Endothelial cell of umbilical vein (primary cell): ENCODE measurements at regions of chr5 and their contacts with region 1.

Region 1: GRCh38 chr5:17189381-17190036 is 27.9 kb upstream of the BASP1 start:
- DNase-seq: peak; percentile 91
- H3K4me3 ChIP-seq: no peak overlapping the region
- H3K27ac ChIP-seq: no peak overlapping the region
- H3K4me1 ChIP-seq: peaks cover 23% of the 10 kb centered on the region
- H3K27me3 ChIP-seq: no peaks in the 10 kb centered on the region
- CTCF ChIP-seq: peak; percentile 65 to 90
- POLR2A ChIP-seq: no peak

Region 2: GRCh38 chr5:16364910-16365309 is 824.6 kb before region 1 on chr5:
- CTCF ChIA-PET with region 1: no interaction called
- POLR2A ChIA-PET with region 1: no interaction called
- dilution Hi-C with region 1: no loop called
- intact Hi-C with region 1: no loop called
- DNase-seq: no peak
- H3K4me3 ChIP-seq: no peak overlapping the region
- H3K27ac ChIP-seq: no peak overlapping the region
- H3K4me1 ChIP-seq: no peaks in the 10 kb centered on the region
- H3K27me3 ChIP-seq: no peaks in the 10 kb centered on the region
- CTCF ChIP-seq: no peak
- POLR2A ChIP-seq: no peak

Region 3: DNA sequence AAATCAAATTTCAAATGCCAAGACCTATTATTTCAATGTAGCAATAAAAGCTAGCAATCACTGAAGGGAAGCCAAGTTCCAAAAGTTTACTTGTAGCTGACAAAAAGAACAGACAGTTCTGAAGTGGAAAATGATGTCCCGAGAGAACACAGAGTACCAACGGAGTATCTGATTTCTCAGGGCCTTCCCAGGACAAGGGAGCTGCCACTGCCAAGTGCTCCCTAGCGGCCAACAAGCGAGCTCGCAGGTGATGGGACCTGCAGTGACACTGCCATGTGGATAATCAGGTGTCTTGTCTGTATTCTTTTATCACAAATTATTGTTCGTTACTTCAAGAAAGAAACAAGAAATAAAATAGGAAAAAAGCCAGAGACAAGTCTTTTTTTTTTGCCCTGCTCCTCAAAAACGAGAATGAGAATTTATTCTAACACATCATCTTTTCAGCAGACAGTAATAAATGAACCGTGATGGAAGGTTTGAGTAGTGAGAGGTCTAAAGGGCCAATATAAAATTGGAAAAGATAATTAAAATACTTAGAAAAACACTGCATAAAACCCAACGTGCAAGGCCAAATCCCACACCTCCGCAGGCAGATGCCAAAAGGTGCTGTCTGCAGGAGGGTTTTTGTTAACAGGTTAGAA is 412.8 kb before region 1 on chr5:
- CTCF ChIA-PET with region 1: interaction called, 10 read pairs
- POLR2A ChIA-PET with region 1: no interaction called
- dilution Hi-C with region 1: loop called (anchors 25 kb)
- intact Hi-C with region 1: no loop called
- DNase-seq: no peak
- H3K4me3 ChIP-seq: no peak overlapping the region
- H3K27ac ChIP-seq: no peak overlapping the region
- H3K4me1 ChIP-seq: peaks cover 7% of the 10 kb centered on the region
- H3K27me3 ChIP-seq: no peaks in the 10 kb centered on the region
- CTCF ChIP-seq: peak in 1 of 2 donors; percentile 14
- POLR2A ChIP-seq: no peak

Region 4: GRCh38 chr5:16812911-16813310 is 376.6 kb before region 1 on chr5:
- CTCF ChIA-PET with region 1: interaction called, 14 read pairs
- POLR2A ChIA-PET with region 1: no interaction called
- dilution Hi-C with region 1: no loop called
- intact Hi-C with region 1: no loop called
- DNase-seq: no peak
- H3K4me3 ChIP-seq: no peak overlapping the region
- H3K27ac ChIP-seq: no peak overlapping the region
- H3K4me1 ChIP-seq: peaks cover 10% of the 10 kb centered on the region
- H3K27me3 ChIP-seq: no peaks in the 10 kb centered on the region
- CTCF ChIP-seq: no peak
- POLR2A ChIP-seq: no peak

Region 5: GRCh38 chr5:16934123-16934522 is 255.4 kb before region 1 on chr5:
- CTCF ChIA-PET with region 1: interaction called, 174 read pairs
- POLR2A ChIA-PET with region 1: interaction called, 3 read pairs
- dilution Hi-C with region 1: no loop called
- intact Hi-C with region 1: loop called (anchors 1 kb)
- DNase-seq: peak; percentile 86
- H3K4me3 ChIP-seq: peak overlapping the region; percentile 83 to 99 (median 97)
- H3K27ac ChIP-seq: peak overlapping the region; percentile 81
- H3K4me1 ChIP-seq: peaks cover 48% of the 10 kb centered on the region
- H3K27me3 ChIP-seq: no peaks in the 10 kb centered on the region
- CTCF ChIP-seq: peak; percentile 90 to 99
- POLR2A ChIP-seq: no peak

Region 6: GRCh38 chr5:17081142-17081541 is 108.4 kb before region 1 on chr5:
- CTCF ChIA-PET with region 1: interaction called, 27 read pairs
- POLR2A ChIA-PET with region 1: no interaction called
- dilution Hi-C with region 1: no loop called
- intact Hi-C with region 1: loop called (anchors 1 kb)
- DNase-seq: no peak
- H3K4me3 ChIP-seq: no peak overlapping the region
- H3K27ac ChIP-seq: peak overlapping the region; percentile 80
- H3K4me1 ChIP-seq: peaks cover 39% of the 10 kb centered on the region
- H3K27me3 ChIP-seq: no peaks in the 10 kb centered on the region
- CTCF ChIP-seq: no peak
- POLR2A ChIP-seq: no peak

Region 7: DNA sequence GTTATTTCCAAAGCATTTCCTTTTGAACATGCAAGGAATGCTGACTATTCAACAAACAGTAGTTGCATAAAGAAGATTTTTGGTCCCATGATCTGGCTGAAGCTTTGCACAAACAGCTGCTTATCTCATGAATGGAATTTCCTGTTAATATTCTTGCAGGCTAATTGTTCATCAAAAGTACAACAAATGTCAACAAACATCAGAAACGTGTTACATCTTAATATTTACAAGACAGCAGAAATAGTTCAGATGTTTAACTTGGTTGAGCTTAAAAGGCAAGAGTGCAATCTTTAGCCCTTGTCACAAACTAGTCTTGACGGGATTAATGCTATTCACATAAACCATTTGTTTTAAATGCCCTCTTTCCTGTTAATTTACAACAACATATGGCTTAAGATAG is 20.0 kb before region 1 on chr5:
- CTCF ChIA-PET with region 1: interaction called, 39 read pairs
- POLR2A ChIA-PET with region 1: no interaction called
- dilution Hi-C with region 1: no loop called
- intact Hi-C with region 1: loop called (anchors 1 kb)
- DNase-seq: peak; percentile 91
- H3K4me3 ChIP-seq: peak overlapping the region in 1 of 3 experiments; percentile 15
- H3K27ac ChIP-seq: peak overlapping the region; percentile 85
- H3K4me1 ChIP-seq: peaks cover 34% of the 10 kb centered on the region
- H3K27me3 ChIP-seq: no peaks in the 10 kb centered on the region
- CTCF ChIP-seq: no peak
- POLR2A ChIP-seq: peak; percentile 50

Region 8: DNA sequence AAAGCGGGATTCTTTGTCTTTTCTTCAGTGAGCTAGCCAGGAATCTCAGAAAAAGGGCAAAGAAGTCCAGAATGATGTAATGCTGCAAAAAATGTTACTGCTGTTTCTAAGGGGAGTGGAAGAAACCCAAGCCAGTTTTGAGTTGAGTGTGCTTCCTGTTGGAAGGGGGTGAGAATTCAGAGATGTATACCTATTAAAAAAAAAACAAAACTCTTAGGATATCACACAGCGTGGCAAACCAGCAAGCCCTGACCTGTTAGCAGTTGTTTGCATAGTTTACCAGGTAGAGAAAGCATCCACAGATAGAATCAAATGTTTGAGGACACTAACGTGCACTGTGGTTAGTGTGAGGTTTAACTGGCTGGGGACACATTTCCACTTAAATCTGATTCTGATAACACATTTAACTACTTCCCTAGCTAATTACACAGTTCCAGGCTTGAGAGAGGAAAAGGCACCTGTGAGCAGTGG is 39.3 kb after region 1 on chr5:
- CTCF ChIA-PET with region 1: no interaction called
- POLR2A ChIA-PET with region 1: no interaction called
- dilution Hi-C with region 1: no loop called
- intact Hi-C with region 1: no loop called
- DNase-seq: peak; percentile 31
- H3K4me3 ChIP-seq: no peak overlapping the region
- H3K27ac ChIP-seq: no peak overlapping the region
- H3K4me1 ChIP-seq: peaks cover 16% of the 10 kb centered on the region
- H3K27me3 ChIP-seq: no peaks in the 10 kb centered on the region
- CTCF ChIP-seq: no peak
- POLR2A ChIP-seq: no peak

Region 9: GRCh38 chr5:17326600-17327037 is 137.1 kb after region 1 on chr5:
- CTCF ChIA-PET with region 1: no interaction called
- POLR2A ChIA-PET with region 1: no interaction called
- dilution Hi-C with region 1: no loop called
- intact Hi-C with region 1: no loop called
- DNase-seq: no peak
- H3K4me3 ChIP-seq: no peak overlapping the region
- H3K27ac ChIP-seq: no peak overlapping the region
- H3K4me1 ChIP-seq: no peaks in the 10 kb centered on the region
- H3K27me3 ChIP-seq: no peaks in the 10 kb centered on the region
- CTCF ChIP-seq: no peak
- POLR2A ChIP-seq: no peak